Common myeloid progenitor, CD34-positive (primary cell): ENCODE measurements at regions of chr9 and their contacts with region 1.

Region 1: GRCh38 chr9:99184475-99185347 is 37.0 kb downstream of the ALG2 start:
- DNase-seq: peak; percentile 95 to 99 (median 98)
- H3K4me3 ChIP-seq: peak overlapping the region in 4 of 7 experiments; percentile 38 to 65 (median 56)
- H3K27ac ChIP-seq: no peak overlapping the region
- H3K4me1 ChIP-seq: peaks cover 7 to 42% (median 32%) of the 10 kb centered on the region in 4 experiments
- H3K27me3 ChIP-seq: no peaks in the 10 kb centered on the region

Region 2: GRCh38 chr9:99085949-99086948 is 98.5 kb before region 1 on chr9:
- CTCF ChIA-PET with region 1: no interaction called
- POLR2A ChIA-PET with region 1: no interaction called
- DNase-seq: peak in 2 of 3 donors; percentile 37 to 55
- H3K4me3 ChIP-seq: no peak overlapping the region
- H3K27ac ChIP-seq: no peak overlapping the region
- H3K4me1 ChIP-seq: peaks cover 0 to 11% (median 3%) of the 10 kb centered on the region in 4 experiments
- H3K27me3 ChIP-seq: no peaks in the 10 kb centered on the region

Region 3: DNA sequence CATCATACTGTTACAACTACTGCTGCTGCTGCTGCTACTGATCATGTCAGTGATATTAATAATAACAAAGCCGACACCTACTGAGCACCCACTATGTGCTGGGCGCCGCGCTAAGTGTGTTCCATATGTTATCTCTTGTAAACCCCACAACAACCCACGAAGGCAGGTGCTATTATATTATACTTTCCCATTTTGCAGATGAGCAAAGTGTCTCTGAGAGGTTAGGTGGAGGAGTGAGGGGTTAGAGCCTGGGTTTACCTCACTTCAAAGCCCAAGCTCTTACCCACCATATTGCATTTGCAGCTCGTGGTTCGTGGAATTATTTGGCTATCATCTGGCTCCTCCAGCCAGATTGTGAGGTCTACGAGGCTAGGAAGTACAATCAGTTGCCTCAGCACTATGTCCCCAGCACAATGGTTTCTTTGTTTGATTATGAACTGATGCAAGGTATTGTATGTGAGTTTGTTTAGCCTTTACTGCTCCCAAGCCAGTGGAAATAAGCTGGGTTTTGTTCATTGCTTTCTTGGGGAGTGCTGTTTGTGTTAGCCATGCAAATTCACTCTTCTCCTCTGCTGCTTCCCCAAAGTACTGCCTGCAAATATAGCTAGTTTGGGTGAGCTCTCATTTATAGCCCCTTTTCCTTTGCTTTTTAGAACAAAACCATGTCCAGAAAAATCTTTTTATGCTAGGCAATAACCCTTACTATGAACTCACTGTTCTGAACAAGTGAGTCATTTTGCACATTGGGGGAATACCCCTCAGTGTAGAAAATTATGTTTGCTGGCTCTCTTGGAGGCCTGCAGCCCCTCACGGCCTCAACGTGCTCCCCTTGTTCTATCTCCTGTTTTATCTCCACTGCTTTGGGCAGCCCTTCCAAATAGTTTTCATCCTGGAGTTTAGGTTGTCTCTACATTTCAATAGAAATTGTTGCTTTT is 10.9 kb before region 1 on chr9:
- CTCF ChIA-PET with region 1: interaction called, 148 read pairs
- POLR2A ChIA-PET with region 1: no interaction called
- DNase-seq: no peak
- H3K4me3 ChIP-seq: no peak overlapping the region
- H3K27ac ChIP-seq: no peak overlapping the region
- H3K4me1 ChIP-seq: no peaks in the 10 kb centered on the region
- H3K27me3 ChIP-seq: no peaks in the 10 kb centered on the region

Region 4: GRCh38 chr9:99231711-99232110 is 47.0 kb after region 1 on chr9:
- CTCF ChIA-PET with region 1: interaction called, 22 read pairs
- POLR2A ChIA-PET with region 1: no interaction called
- DNase-seq: peak; percentile 32 to 66 (median 64)
- H3K4me3 ChIP-seq: no peak overlapping the region
- H3K27ac ChIP-seq: no peak overlapping the region
- H3K4me1 ChIP-seq: peaks cover 4 to 20% (median 10%) of the 10 kb centered on the region in 4 experiments
- H3K27me3 ChIP-seq: no peaks in the 10 kb centered on the region

Region 5: DNA sequence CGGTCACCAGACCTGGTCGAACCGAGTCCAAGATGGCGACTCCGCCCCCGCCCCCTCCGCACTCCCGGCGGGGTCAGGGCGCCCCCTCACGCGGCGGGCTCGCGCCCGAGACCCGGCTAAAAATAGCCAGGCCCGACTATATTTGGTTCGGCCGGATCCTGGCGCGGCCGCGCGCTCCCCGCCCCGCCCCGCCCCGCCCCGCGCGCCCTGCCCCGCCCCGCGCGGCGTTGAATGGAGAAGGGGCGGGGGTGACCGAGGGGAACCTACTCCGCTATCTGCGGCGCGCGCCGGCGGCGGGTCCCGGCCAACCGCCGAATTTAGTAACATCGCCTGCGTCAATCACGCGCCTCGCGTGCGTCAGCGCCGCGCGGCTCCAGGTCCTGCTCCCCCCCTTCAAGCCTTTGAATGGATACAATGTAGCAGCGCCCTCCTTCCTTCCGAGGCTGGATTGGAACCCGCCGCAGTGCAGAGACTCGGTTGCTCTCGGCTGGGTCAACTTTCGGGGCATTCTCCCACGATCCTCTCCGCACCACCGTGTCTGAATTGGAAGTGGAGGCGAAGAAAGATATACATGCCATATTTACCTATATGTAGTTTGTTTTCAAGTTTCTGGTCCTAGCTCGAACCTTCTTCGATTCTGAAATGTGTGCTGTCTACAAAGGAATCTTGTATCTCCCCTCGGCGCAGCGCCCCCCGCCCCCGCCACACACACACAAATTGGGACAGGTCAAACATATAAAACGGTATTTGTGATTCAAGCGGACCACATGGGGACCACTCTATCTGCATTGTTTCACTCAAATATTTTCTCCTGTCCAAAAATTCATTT is 635.4 kb after region 1 on chr9:
- CTCF ChIA-PET with region 1: interaction called, 6 read pairs
- POLR2A ChIA-PET with region 1: interaction called, 10 read pairs
- DNase-seq: peak; percentile 96 to 98 (median 98)
- H3K4me3 ChIP-seq: peak overlapping the region; percentile 73 to 94 (median 82)
- H3K27ac ChIP-seq: peak overlapping the region; percentile 86 to 92
- H3K4me1 ChIP-seq: peaks cover 14 to 59% (median 56%) of the 10 kb centered on the region in 4 experiments
- H3K27me3 ChIP-seq: peaks cover 0 to 29% (median 14%) of the 10 kb centered on the region in 5 experiments